ENCODE measurements at regions of chr18 and their contacts with region 1.

Region 1: DNA sequence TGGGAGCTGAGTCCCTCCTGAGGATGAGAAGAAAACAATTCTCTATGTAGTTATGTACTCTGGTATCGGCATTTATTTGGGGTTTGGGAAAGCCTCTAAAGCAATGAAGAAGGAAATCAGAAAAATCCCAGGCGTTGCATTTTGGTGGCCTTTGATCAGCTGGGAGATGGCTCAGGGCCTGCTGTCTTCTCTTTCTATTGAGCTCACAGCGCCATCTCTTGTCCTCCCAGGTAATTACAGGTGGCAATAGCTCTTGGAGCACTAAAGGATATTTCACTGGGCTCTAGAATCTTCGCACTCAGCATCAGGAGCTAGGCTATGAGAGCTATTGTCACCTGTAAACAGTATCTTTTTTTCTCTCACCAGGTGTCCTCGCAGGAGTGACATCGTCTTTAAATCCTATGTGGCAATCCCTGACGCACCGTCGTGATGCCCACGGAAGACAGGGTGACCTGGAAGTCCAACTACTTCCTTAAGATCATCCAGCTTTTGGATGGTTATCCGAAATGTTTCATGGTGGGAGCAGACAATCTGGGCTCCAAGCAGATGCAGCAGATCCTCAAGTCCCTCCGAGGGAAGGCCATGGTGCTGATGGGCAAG is 76.1 kb upstream of the PMAIP1 start:
- DNase-seq: peak; percentile 40 to 69
- ATAC-seq: peak; percentile 69

Region 2: DNA sequence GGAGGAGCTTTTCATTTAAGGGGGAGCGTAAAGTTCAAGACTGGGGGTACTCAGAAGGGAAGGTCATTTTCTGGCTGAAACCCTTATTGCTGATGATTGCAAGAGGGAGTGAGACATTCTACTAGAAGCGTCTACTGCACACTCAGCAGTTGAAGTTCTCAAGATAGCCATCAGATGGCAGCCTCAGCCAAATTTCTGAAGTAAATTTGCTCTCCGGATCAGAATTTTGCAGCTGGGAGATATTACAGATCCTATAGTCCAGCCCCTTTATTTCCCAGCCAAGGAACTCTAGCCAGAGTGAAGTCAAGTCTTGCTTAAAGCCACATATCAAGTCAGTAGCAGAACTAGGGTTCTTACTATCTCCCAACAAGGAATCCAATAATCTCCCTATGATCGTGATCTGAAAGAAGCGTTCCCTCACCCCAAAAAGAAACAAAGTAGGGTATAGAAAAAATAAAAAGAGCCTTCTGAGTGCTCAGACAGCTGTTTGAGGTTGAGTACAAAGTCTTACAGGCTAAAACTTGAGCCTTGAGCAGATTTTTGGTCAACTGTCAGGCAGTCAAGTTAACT is 574.4 kb before region 1 on chr18:
- intact Hi-C with region 1: loop called in 1 of 2 experiments (anchors 10 kb)
- DNase-seq: peak in 1 of 2 donors; percentile 29
- ATAC-seq: peak; percentile 49

Region 3: GRCh38 chr18:59459369-59460079 is 364.2 kb before region 1 on chr18:
- intact Hi-C with region 1: loop called in 1 of 2 experiments (anchors 5 kb)
- DNase-seq: no peak
- ATAC-seq: no peak

Region 4: DNA sequence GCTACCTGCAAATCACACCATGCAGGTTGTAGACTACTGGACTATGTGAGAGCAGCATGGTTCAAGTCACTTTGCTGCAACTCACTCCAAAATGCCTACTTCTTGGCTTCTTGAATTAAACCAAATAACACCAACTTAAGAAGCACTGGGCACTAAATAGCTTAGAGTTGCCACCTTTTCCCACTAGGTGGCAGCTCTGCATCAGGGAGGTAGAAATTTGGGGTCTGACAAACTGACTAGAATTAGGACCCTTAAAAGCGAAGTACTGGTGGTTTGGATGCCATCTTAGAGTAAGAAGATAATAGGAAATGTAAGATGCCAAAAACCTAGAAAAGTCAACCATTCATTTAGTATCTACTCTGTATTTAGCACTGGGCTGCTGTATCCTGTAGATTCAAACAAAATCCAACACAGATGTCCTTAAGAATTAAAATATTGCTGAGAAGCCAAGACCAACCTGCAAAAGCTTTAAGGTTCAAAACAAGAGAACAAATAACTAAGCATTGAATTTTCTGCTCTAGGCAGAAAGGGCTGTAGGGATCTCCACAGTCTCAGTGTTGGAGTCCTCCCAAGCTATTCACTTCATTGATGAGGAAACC is 192.0 kb before region 1 on chr18:
- intact Hi-C with region 1: loop called in 1 of 2 experiments (anchors 5 kb)
- DNase-seq: no peak
- ATAC-seq: no peak

Region 5: DNA sequence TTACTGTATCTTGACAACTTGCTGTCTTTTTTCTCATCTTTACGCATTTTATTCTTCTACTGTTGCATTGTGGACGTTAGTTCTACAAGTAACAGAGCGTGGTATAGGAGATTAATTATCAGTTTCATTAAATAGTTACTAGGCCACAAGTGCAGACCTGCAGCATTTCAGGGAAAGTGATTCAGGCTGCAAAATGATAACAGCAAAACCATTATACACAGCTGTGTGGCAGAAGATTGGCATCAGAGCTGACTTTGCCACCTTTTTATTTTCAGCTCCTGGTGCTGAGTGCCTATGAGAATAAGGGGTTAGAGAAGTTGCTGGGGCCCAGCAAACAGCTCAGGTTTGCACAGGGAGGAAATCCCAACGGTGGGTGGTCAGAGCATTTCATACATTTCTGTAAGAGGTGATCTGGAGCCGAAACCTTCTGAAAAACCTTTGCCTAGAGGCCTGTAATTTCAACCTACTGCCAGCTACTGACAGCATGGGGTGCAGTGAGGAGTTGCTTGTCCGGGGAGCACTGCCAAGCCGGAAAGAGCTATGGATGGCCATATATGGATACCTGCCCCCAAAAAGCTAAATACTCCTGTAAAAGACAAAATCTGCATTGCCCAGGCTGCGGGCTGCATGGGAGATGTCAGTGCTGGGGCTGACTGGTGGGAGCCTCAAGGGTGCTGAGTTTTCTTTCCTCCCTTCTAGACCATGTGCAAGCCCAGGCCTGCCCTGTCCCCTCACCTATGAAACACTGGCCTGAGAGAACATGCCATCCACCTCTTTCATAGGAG is 123.8 kb before region 1 on chr18:
- intact Hi-C with region 1: loop called in 1 of 2 experiments (anchors 10 kb)
- DNase-seq: no peak
- ATAC-seq: no peak

Region 6: GRCh38 chr18:59769129-59769865 is 54.4 kb before region 1 on chr18:
- intact Hi-C with region 1: no loop called
- DNase-seq: no peak
- ATAC-seq: no peak

Region 7: DNA sequence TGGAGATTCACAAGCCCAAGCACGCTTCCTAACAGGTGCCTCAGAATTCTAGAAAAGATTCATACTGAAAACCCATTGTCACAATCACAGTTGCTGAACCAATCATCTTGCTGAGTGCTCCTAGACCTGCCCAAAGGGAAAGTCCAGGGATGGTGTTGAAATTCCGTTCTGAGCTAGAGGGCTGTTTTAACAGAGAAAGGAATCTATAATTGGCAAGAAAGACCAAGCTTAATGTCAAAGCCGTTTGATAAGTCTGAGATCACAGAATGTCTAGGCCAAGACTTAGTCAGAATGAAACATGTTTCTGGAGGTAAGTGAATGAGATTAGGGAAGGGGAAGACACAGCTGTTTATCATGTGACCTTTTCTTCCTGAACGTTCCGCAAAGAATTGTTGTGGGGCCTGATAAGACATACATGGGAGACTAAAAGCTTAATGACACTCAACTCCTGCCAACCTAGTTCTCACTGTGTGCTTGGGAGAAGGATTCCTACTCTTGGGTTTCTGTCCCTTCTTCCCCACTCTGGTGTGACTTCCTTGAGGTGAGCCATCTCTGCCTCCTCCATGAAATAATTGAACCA is 103.6 kb after region 1 on chr18:
- intact Hi-C with region 1: no loop called
- DNase-seq: no peak
- ATAC-seq: no peak

Region 8: DNA sequence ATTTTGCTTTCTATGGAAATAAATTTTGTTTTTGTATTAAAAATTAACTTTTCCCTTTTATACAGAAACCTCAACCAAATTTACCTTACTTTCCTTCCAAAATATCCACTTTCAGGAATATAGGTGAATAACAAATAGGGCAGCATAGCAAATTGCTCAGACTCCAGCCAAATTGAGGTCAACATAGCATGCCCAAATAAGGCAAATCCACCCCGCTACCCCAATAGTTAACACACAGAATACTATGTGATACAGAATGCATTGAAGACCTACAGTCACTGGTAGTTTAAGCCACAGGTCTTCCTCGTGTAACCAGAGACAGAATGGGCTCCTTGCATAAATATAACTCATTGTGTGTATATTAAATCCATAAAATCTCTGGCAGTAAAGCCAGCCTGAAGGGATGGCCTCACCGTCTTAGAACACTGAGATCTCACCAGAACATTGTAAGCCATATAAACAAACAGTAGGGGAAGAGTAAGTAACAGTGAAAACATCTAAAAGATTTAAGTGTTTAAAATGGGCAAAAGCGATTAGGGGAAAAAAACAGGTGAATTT is 148.3 kb after region 1 on chr18:
- intact Hi-C with region 1: no loop called
- DNase-seq: no peak
- ATAC-seq: no peak